Gastrocnemius medialis (tissue), 4 donors: ENCODE measurements at regions of chr17 and their contacts with region 1.

Region 1: GRCh38 chr17:45640141-45640850 is 143.8 kb upstream of the CRHR1 start:
- DNase-seq: peak; percentile 14 to 46
- ATAC-seq: peak; percentile 72 to 81
- H3K4me3 ChIP-seq: no peak overlapping the region
- H3K27ac ChIP-seq: no peak overlapping the region
- H3K4me1 ChIP-seq: no peaks in the 10 kb centered on the region
- H3K27me3 ChIP-seq: no peaks in the 10 kb centered on the region
- CTCF ChIP-seq: peak; percentile 90 to 98 (median 95)
- POLR2A ChIP-seq: no peak

Region 2: GRCh38 chr17:45828628-45829027 is 188.3 kb after region 1 on chr17:
- in situ Hi-C with region 1: loop called (anchors 5 kb)
- intact Hi-C with region 1: loop called (anchors 1 kb)
- DNase-seq: no peak
- ATAC-seq: no peak
- H3K4me3 ChIP-seq: no peak overlapping the region
- H3K27ac ChIP-seq: no peak overlapping the region
- H3K4me1 ChIP-seq: no peaks in the 10 kb centered on the region
- H3K27me3 ChIP-seq: no peaks in the 10 kb centered on the region
- CTCF ChIP-seq: no peak
- POLR2A ChIP-seq: no peak

Region 3: DNA sequence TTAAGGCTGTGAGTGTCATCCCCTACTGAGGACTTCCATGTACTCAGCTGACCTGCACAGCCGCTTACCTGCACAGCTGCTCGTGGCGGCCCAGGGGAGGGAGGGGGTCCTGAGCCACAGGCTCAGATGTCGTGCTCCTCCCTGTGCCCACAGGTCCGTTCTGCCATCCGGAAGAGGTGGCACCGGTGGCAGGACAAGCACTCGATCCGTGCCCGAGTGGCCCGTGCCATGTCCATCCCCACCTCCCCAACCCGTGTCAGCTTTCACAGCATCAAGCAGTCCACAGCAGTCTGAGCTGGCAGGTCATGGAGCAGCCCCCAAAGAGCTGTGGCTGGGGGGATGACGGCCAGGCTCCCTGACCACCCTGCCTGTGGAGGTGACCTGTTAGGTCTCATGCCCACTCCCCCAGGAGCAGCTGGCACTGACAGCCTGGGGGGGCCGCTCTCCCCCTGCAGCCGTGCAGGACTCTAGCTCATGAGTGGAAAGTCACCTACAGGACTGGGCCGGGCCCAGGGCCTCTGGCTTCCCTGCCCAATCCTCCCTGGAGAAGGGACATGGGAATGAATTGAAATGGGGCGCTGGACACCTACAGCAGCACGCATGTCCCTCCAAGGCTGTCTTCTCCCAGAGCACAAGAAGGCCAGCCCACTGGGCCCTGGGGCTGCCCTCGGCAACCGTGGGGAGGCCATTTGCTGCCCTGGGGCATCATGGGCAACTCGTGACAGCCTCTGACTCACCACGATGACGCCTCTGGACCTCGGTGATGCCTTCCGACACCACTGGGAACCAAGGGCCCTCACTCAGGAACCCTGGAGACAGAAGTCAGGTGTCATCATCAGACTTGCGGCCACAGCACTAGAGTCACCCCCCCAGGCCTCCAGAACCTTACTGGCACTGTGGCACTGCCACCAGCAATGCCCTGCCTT is 194.4 kb after region 1 on chr17:
- in situ Hi-C with region 1: loop called (anchors 5 kb)
- intact Hi-C with region 1: loop called (anchors 1 kb)
- DNase-seq: no peak
- ATAC-seq: no peak
- H3K4me3 ChIP-seq: no peak overlapping the region
- H3K27ac ChIP-seq: no peak overlapping the region
- H3K4me1 ChIP-seq: no peaks in the 10 kb centered on the region
- H3K27me3 ChIP-seq: no peaks in the 10 kb centered on the region
- CTCF ChIP-seq: no peak
- POLR2A ChIP-seq: no peak

Region 4: DNA sequence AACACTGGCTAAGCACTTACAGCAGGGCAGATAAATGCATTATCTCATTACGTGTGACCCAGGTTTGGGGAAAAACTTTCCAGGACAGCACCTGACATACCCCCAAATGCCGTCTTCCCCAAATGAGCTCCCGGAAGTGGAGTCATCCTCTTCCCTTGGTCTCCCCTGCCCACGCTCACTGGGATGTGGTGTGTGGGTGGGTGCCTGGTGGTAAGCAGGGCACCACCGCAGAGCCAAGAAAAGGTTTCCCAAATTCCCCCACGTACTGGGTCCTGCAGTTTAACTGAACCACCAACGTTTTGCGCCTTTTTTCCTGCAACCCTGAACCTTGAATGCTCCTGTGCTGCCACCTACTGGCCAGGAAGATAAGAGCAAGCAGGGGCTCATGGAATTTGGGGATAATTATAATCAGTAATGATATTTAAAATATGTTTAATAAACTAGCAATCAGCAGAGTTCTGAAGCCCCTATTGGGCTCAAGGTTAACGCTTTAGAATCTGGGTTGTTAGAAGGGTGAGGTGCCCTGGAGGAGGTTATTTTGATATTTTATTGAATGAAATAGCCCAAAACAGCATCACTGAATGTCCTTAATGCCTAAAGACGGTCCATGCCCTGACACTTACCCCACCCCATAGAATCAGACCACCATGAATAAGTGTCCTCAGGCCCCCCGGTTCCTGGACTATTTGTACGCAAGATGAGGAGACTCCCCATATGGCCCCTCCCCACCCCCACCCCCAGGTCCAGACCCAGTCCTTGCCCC is 212.4 kb after region 1 on chr17:
- in situ Hi-C with region 1: no loop called
- intact Hi-C with region 1: loop called (anchors 1 kb)
- DNase-seq: peak in 1 of 2 donors; percentile 31
- ATAC-seq: peak in 1 of 2 donors; percentile 24
- H3K4me3 ChIP-seq: no peak overlapping the region
- H3K27ac ChIP-seq: no peak overlapping the region
- H3K4me1 ChIP-seq: peaks cover 0 to 4% of the 10 kb centered on the region in 2 donors
- H3K27me3 ChIP-seq: no peaks in the 10 kb centered on the region
- CTCF ChIP-seq: peak; percentile 63 to 92 (median 80)
- POLR2A ChIP-seq: no peak

Region 5: DNA sequence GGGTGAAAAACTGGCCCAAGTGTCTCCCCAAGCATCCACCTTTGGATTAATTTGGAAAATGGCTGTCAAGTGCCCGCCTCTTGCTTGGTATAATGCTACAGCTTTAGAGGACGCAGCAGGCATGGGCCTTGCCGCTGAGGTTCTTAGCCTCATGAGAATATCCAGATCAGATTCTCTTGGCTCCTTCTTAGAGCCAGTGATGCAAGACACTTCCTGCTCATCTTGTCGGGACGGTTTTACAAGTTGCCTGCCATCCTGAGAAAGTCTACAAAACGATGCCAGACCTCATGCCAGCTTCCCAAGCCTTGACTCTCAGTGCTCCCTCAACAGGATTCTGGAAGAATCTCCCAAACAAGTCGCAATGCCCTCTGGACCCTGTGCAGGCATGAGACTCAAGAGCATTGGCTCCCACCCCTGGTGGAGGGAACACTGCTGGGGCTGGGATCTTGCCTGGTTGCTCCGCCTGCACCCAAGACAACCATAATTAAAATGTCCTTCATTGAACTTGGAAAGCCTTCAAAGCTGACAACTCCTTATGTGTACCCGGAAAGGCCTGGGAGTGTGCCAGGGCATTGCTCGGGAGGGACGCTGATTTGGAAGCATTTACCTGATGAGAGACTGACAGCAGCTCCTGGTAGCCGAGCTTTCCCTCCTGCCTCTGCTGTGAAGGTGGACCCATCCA is 332.9 kb after region 1 on chr17:
- in situ Hi-C with region 1: loop called in 2 of 4 experiments (anchors 25 kb)
- intact Hi-C with region 1: no loop called
- DNase-seq: peak; percentile 23 to 67
- ATAC-seq: peak; percentile 74 to 76
- H3K4me3 ChIP-seq: no peak overlapping the region
- H3K27ac ChIP-seq: peak overlapping the region; percentile 35 to 75 (median 70)
- H3K4me1 ChIP-seq: peaks cover 37 to 60% of the 10 kb centered on the region in 2 donors
- H3K27me3 ChIP-seq: no peaks in the 10 kb centered on the region
- CTCF ChIP-seq: no peak
- POLR2A ChIP-seq: no peak